ENCODE measurements at regions of chr7 and their contacts with region 1.

Region 1: DNA sequence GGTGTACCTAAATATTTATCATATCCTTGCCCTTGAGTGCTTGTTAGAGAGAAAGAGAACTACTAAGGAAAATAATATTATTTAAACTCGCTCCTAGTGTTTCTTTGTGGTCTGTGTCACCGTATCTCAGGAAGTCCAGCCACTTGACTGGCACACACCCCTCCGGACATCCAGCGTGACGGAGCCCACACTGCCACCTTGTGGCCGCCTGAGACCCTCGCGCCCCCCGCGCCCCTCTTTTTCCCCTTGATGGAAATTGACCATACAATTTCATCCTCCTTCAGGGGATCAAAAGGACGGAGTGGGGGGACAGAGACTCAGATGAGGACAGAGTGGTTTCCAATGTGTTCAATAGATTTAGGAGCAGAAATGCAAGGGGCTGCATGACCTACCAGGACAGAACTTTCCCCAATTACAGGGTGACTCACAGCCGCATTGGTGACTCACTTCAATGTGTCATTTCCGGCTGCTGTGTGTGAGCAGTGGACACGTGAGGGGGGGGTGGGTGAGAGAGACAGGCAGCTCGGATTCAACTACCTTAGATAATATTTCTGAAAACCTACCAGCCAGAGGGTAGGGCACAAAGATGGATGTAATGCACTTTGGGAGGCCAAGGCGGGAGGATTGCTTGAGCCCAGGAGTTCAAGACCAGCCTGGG is 11.4 kb downstream of the SERPINE1 start:
- DNase-seq: peak; percentile 70 to 92 (median 78)
- H3K4me3 ChIP-seq: no peak overlapping the region
- H3K27ac ChIP-seq: peak overlapping the region in 1 of 2 donors; percentile 29
- H3K4me1 ChIP-seq: peaks cover 1% of the 10 kb centered on the region
- H3K27me3 ChIP-seq: no peaks in the 10 kb centered on the region
- CTCF ChIP-seq: peak; percentile 46 to 90 (median 86)
- EP300 ChIP-seq: no peak
- POLR2A ChIP-seq: no peak

Region 2: DNA sequence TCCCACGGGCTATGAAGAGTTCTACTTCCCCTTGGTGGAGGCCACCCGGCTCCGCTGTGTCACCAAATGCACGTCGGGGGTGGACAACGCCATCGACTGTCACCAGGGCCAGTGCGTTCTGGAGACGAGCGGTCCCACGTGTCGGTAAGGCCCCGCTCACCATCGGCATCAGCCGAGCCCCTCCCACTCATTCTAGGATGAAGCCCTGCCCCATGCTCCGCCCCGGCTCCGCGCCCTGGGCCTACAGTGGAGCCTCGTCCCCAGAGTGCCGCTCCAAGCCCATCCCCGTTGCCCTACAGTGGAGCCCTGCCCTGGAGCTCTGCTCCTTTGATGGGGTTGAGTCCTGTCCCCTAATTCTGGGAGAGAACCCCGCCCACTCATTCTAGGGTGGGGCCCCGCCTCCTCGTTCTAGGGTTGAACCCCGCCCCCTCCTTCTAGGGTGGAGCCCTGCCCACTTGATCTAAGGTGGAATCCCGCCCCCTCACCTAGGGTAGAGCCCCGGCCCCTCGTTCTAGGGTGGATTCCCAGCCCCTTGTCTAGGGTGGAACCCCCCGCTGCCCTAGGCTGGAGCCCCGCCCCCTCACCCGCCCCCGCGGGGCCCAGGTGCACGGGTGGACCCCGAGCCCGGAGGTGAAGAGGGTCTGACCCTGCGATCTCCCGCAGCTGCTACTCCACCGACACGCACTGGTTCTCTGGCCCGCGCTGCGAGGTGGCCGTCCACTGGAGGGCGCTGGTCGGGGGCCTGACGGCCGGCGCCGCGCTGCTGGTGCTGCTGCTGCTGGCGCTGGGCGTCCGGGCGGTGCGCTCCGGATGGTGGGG is 172.4 kb before region 1 on chr7:
- intact Hi-C with region 1: no loop called
- DNase-seq: peak; percentile 31 to 74 (median 52)
- H3K4me3 ChIP-seq: peak overlapping the region; percentile 7
- H3K27ac ChIP-seq: no peak overlapping the region
- H3K4me1 ChIP-seq: peaks cover 8% of the 10 kb centered on the region
- H3K27me3 ChIP-seq: peaks cover 3% of the 10 kb centered on the region
- CTCF ChIP-seq: peak in 1 of 3 donors; percentile 36
- EP300 ChIP-seq: no peak
- POLR2A ChIP-seq: no peak

Region 3: GRCh38 chr7:101085162-101085987 is 53.0 kb before region 1 on chr7 and contains the start of gene TRIM56:
- intact Hi-C with region 1: loop called in 2 of 4 experiments (anchors 10 kb)
- DNase-seq: peak; percentile 88 to 92 (median 90)
- H3K4me3 ChIP-seq: peak within 1 kb of the TSS; percentile 78
- H3K27ac ChIP-seq: peak within 1 kb of the TSS; percentile 64 to 91
- H3K4me1 ChIP-seq: peaks cover 7% of the 10 kb centered on the region
- H3K27me3 ChIP-seq: no peaks in the 10 kb centered on the region
- CTCF ChIP-seq: no peak
- EP300 ChIP-seq: no peak
- POLR2A ChIP-seq: peak; percentile 71
- total RNA-seq, gene TRIM56: 18.2 to 77.4 (median 48.5) TPM

Region 4: GRCh38 chr7:101099969-101100781 is 38.2 kb before region 1 on chr7:
- intact Hi-C with region 1: loop called in 2 of 4 experiments (anchors 5 kb)
- DNase-seq: peak; percentile 94 to 99 (median 97)
- H3K4me3 ChIP-seq: no peak overlapping the region
- H3K27ac ChIP-seq: peak overlapping the region; percentile 50 to 64
- H3K4me1 ChIP-seq: peaks cover 6% of the 10 kb centered on the region
- H3K27me3 ChIP-seq: no peaks in the 10 kb centered on the region
- CTCF ChIP-seq: no peak
- EP300 ChIP-seq: peak; percentile 53
- POLR2A ChIP-seq: no peak

Region 5: DNA sequence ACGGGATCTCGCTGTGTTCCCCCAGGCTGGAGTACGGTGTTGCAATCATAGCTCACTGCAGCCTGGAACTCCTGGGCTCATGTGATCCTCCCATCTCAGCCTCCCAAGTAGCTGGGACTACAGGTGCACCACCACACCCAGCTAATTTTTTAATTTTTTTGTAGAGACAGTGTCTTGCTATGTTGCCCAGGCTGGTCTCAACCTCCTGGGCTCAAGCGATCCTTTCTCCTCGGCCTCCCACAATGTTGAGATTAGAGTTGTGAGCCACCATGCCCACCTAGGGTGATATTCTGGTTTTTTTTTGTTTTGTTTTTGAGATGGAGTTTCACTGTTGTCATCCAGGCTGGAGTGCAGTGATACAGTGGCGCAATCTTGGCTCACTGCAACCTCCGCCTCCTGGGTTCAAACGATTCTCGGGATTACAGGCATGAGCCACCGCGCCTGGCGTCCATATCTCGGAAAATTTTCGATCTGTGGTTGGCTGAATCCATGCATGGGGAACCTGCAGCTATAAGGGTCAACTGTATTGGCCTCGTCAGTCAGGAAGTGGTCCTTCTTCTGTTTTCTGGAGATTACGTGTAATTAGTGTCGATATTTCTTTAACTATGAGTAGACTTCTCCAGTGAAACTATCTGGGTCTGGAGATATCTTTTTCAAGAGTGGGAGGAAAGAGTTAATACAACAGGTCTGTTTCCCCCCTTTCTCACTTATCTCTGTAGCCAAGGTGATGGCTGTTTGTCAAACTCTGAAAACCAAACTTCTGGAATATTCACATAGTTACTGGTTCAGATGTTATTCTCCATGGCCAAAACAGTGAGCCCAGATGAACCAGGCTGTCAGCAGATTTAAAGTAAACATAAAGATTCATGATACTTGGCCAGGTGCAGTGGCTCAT is 127.5 kb after region 1 on chr7:
- intact Hi-C with region 1: no loop called
- DNase-seq: no peak
- H3K4me3 ChIP-seq: no peak overlapping the region
- H3K27ac ChIP-seq: no peak overlapping the region
- H3K4me1 ChIP-seq: no peaks in the 10 kb centered on the region
- H3K27me3 ChIP-seq: no peaks in the 10 kb centered on the region
- CTCF ChIP-seq: no peak
- EP300 ChIP-seq: no peak
- POLR2A ChIP-seq: no peak

Region 6: DNA sequence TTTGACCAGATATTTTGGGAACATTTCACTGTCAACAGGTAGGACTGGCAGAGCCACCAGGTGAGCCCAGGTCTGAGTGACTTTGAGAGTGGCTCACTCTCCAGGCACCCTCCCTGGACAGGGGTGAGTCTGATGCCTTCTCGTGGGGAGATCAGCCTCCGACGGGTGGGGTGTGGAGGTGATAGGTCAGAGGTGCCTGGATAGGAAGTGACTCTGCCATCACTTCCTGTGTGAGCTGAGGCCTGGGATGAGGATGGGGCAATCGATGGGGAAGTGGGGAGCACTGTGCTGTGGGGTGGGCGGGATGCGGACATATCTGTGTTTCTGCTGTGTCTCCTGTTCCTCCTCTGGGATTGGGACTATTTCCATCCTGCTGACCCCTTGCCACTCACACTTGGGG is 148.7 kb after region 1 on chr7:
- intact Hi-C with region 1: loop called in 3 of 4 experiments (anchors 2 to 10 kb)
- DNase-seq: no peak
- H3K4me3 ChIP-seq: no peak overlapping the region
- H3K27ac ChIP-seq: no peak overlapping the region
- H3K4me1 ChIP-seq: peaks cover 2% of the 10 kb centered on the region
- H3K27me3 ChIP-seq: no peaks in the 10 kb centered on the region
- CTCF ChIP-seq: no peak
- EP300 ChIP-seq: no peak
- POLR2A ChIP-seq: no peak

Region 7: DNA sequence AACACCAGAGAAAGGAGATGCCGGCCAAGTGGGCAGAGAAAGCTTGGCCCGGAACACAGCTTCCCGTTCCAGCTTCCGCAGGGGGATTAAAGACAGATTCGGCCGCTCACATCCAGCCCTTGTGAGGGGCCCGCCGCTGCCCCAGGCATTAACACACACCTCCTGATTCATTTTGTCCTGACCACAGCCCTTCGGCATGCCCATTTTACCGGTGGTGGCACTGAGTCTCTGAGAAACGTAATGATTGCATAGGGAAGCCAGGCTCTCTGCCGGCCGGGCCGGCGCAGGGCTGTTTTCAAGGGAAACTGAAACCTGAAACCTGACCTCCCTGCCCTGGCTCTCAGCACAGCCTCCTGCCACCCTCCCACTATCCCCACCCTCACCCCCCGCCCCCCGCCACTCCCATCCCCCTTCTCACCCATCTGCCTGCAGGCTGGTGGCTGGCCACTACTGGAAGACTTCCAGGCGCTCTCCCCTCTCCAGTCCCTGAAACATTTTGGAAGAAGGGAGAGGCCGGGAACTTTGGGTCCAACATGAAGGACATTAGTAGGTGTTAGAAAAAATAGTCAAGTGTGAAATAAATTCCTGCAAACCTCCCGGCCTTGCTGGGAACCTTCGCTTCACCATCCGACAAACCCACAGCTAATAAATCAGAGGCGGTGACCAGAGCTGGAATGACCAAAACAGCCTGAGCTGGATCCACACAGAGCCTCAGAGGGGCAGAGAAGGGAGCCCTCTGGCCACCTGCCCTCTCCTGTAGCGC is 595.6 kb after region 1 on chr7:
- intact Hi-C with region 1: no loop called
- DNase-seq: peak; percentile 37 to 71 (median 58)
- H3K4me3 ChIP-seq: peak overlapping the region; percentile 30
- H3K27ac ChIP-seq: peak overlapping the region in 1 of 2 donors; percentile 52
- H3K4me1 ChIP-seq: peaks cover 2% of the 10 kb centered on the region
- H3K27me3 ChIP-seq: no peaks in the 10 kb centered on the region
- CTCF ChIP-seq: no peak
- EP300 ChIP-seq: no peak
- POLR2A ChIP-seq: no peak

Measured in ovary (tissue), 10 donors.